ENCODE measurements at regions of chr14 and their contacts with region 1.

Region 1: GRCh38 chr14:97620066-97620465 is 822.9 kb downstream of the VRK1 start:
- DNase-seq: peak in 3 of 14 experiments; percentile 26 to 39 (median 29)
- ATAC-seq: peak; percentile 18
- H3K4me3 ChIP-seq: no peak overlapping the region
- H3K4me3 Mint-ChIP-seq: peak overlapping the region; percentile 87
- H3K27ac ChIP-seq: peak overlapping the region; percentile 42 to 46
- H3K27ac Mint-ChIP-seq: peak overlapping the region; percentile 94
- H3K4me1 ChIP-seq: peaks cover 20% of the 10 kb centered on the region
- H3K4me1 Mint-ChIP-seq: peaks cover 51% of the 10 kb centered on the region
- H3K27me3 ChIP-seq: no peaks in the 10 kb centered on the region
- H3K27me3 Mint-ChIP-seq: no peaks in the 10 kb centered on the region
- CTCF ChIP-seq: no peak

Region 2: DNA sequence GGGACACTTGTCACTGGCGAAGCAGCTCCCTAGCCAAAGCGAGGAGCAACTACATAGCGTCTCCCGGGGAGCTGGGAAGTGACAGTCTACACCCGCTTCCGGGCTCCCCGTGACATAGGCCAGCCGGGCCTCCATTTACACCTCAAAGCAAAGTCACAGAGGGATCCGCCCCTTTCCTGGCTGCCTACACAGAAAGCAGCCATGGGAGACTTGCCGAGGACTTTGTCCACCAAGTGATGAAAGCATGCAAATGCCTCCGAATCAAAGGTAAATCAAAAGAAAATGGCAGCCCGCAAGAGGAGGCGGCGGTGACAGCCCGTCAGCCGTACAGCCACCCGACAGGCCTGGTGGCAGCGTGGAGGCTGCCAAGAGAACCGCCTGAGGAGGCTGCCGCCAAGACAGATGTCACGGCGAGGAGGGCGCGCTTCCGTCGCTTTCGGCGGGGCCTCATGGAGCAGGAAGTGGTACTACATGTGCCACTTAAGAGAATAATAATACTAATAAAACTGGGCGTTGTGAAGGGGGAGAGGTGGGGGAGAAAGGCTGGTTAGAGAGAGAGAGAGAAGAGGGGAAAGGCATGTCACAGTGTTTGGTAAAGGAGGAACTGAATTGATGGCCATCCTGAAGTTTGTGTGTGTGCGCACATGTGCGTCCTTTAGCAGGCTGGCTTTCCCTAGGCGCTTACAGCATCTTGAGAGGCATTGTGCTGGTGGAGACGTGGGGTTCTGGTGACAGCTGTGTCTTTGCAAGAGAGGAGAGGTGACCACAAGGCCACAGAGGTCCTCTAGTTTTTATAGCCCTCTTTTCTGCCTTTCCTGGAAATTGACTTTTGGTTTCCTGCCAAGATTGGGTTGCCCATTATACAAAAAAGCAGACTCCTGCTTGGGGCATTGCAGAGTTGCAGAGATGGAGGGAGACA is 161.1 kb before region 1 on chr14:
- CTCF ChIA-PET with region 1: no interaction called
- POLR2A ChIA-PET with region 1: interaction called, 4 read pairs
- intact Hi-C with region 1: loop called in 1 of 2 experiments (anchors 5 kb)
- DNase-seq: peak; percentile 70 to 94 (median 80)
- ATAC-seq: peak; percentile 86
- H3K4me3 ChIP-seq: peak overlapping the region; percentile 61
- H3K4me3 Mint-ChIP-seq: peak overlapping the region; percentile 92
- H3K27ac ChIP-seq: peak overlapping the region; percentile 76 to 89
- H3K27ac Mint-ChIP-seq: peak overlapping the region; percentile 98
- H3K4me1 ChIP-seq: peaks cover 42% of the 10 kb centered on the region
- H3K4me1 Mint-ChIP-seq: peaks cover 65% of the 10 kb centered on the region
- H3K27me3 ChIP-seq: no peaks in the 10 kb centered on the region
- H3K27me3 Mint-ChIP-seq: no peaks in the 10 kb centered on the region
- CTCF ChIP-seq: no peak

Region 3: DNA sequence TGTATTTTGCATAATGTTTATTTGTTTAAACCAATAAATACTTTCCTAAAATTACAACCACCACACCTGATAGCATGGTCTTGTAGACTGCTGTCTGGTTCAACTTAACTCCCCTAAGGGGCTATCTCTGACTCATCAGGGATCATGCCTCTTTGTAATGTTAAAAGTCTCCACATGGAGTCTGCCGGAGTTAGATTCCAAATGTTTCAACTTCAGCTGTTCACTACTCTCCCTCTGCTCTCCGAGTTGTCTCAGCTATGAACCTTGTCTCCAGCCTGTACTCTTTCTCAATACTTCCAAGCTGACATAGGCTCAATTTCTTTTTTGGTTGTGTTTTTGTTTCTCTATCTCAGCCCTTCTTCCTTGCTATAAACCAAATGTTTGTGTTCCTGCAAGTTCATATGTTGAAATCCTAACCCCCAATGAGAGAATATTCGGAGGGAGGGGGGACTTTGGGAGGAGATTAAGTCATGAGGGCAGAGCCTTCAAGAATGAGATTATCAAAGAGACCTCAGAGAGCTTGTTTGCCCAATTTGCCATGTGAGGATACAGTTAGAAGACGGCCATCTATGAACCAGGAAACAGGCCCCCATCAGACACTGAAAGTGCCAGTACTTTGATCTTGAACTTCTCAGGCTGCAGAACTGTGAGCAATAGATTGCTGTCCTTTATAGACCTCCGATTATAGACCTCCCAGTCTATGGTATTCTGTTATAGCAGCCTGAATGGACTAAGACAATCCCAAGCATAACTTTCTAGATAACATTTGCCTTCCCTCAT is 35.3 kb after region 1 on chr14:
- CTCF ChIA-PET with region 1: no interaction called
- POLR2A ChIA-PET with region 1: no interaction called
- intact Hi-C with region 1: no loop called
- DNase-seq: no peak
- ATAC-seq: no peak
- H3K4me3 ChIP-seq: no peak overlapping the region
- H3K4me3 Mint-ChIP-seq: no peak overlapping the region
- H3K27ac ChIP-seq: no peak overlapping the region
- H3K27ac Mint-ChIP-seq: no peak overlapping the region
- H3K4me1 ChIP-seq: no peaks in the 10 kb centered on the region
- H3K4me1 Mint-ChIP-seq: peaks cover 15% of the 10 kb centered on the region
- H3K27me3 ChIP-seq: no peaks in the 10 kb centered on the region
- H3K27me3 Mint-ChIP-seq: no peaks in the 10 kb centered on the region
- CTCF ChIP-seq: no peak

Region 4: GRCh38 chr14:97724265-97724731 is 104.2 kb after region 1 on chr14:
- CTCF ChIA-PET with region 1: no interaction called
- POLR2A ChIA-PET with region 1: interaction called, 3 read pairs
- intact Hi-C with region 1: loop called in 1 of 2 experiments (anchors 5 kb)
- DNase-seq: peak in 13 of 14 experiments; percentile 9 to 76 (median 37)
- ATAC-seq: peak; percentile 80
- H3K4me3 ChIP-seq: peak overlapping the region; percentile 36
- H3K4me3 Mint-ChIP-seq: peak overlapping the region; percentile 85
- H3K27ac ChIP-seq: peak overlapping the region; percentile 75 to 80
- H3K27ac Mint-ChIP-seq: peak overlapping the region; percentile 94
- H3K4me1 ChIP-seq: peaks cover 54% of the 10 kb centered on the region
- H3K4me1 Mint-ChIP-seq: peaks cover 90% of the 10 kb centered on the region
- H3K27me3 ChIP-seq: no peaks in the 10 kb centered on the region
- H3K27me3 Mint-ChIP-seq: no peaks in the 10 kb centered on the region
- CTCF ChIP-seq: peak; percentile 20

Measured in CD4-positive, alpha-beta T cell (primary cell).